ENCODE measurements at regions of chr1 and their contacts with region 1.

Region 1: DNA sequence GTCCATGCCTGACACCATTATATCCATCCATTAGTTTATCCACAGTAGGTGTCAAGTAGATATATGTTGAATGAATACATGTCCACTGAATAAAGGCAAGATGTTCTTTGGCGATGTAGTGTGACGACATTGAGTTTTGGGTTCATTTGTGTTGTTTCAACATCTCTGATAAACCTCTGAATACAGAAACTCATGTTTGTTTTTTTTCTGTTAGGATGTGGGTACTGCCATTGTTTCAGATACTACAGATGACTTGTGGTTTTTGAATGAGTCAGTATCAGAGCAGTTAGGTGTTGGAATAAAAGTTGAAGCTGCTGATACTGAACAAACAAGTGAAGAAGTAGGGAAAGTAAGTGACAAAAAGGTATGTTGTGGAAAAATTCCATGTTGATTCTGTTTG is 28.1 kb downstream of the MDM4 start:
- DNase-seq: no peak
- ATAC-seq: peak; percentile 88
- H3K4me3 Mint-ChIP-seq: peak overlapping the region; percentile 37
- H3K27ac Mint-ChIP-seq: peak overlapping the region; percentile 69
- H3K4me1 Mint-ChIP-seq: peaks cover 56% of the 10 kb centered on the region
- H3K27me3 Mint-ChIP-seq: no peaks in the 10 kb centered on the region

Region 2: GRCh38 chr1:204516180-204516879 is 28.0 kb before region 1 on chr1 and contains the start of gene MDM4:
- CTCF ChIA-PET with region 1: interaction called, 4 read pairs
- POLR2A ChIA-PET with region 1: interaction called, 5 read pairs
- intact Hi-C with region 1: loop called (anchors 2 kb)
- DNase-seq: peak; percentile 98
- ATAC-seq: peak; percentile 85
- H3K4me3 Mint-ChIP-seq: no peak within 1 kb of the TSS
- H3K27ac Mint-ChIP-seq: no peak within 1 kb of the TSS
- H3K4me1 Mint-ChIP-seq: peaks cover 62% of the 10 kb centered on the region
- H3K27me3 Mint-ChIP-seq: no peaks in the 10 kb centered on the region
- total RNA-seq, gene MDM4: 89.1 to 94.6 TPM

Region 3: GRCh38 chr1:204523605-204524215 is 20.6 kb before region 1 on chr1:
- CTCF ChIA-PET with region 1: interaction called, 7 read pairs
- POLR2A ChIA-PET with region 1: interaction called, 5 read pairs
- intact Hi-C with region 1: loop called (anchors 2 kb)
- DNase-seq: peak; percentile 47
- ATAC-seq: no peak
- H3K4me3 Mint-ChIP-seq: no peak overlapping the region
- H3K27ac Mint-ChIP-seq: peak overlapping the region; percentile 88
- H3K4me1 Mint-ChIP-seq: peaks cover 56% of the 10 kb centered on the region
- H3K27me3 Mint-ChIP-seq: no peaks in the 10 kb centered on the region

Region 4: DNA sequence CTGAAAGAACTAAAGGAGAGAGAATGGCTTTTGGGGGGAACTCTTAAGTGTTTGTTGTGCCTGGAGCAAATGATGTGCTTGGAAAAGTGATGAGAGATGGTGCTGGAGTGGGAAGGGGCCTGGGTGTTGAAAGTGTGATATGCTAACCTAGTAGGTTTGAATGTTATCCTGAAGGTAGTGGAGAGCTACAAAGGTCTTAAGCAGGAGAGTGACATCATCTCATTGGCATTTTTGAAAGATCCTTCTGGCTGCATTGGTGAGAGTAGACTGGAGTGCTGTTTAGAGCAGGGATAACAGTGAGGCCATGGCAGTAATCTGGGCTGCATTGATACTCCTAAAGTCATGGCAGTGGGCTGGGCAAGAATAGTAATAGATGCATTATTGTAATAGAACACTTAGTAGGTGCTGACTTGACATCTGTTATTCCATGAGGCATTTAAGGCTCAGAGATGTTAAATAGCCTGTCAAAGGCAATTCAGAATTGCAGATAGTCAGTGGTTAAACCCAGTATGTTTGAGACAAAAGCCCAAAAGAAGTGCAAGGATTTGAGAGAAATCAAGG is 16.3 kb after region 1 on chr1:
- CTCF ChIA-PET with region 1: interaction called, 10 read pairs
- POLR2A ChIA-PET with region 1: no interaction called
- intact Hi-C with region 1: no loop called
- DNase-seq: no peak
- ATAC-seq: no peak
- H3K4me3 Mint-ChIP-seq: no peak overlapping the region
- H3K27ac Mint-ChIP-seq: peak overlapping the region; percentile 18
- H3K4me1 Mint-ChIP-seq: peaks cover 60% of the 10 kb centered on the region
- H3K27me3 Mint-ChIP-seq: no peaks in the 10 kb centered on the region

Measured in activated CD4-positive, alpha-beta T cell treated with anti-CD3 and anti-CD28 coated beads for 36 hours (primary cell).